ENCODE measurements at regions of chr3 and their contacts with region 1.

Region 1: DNA sequence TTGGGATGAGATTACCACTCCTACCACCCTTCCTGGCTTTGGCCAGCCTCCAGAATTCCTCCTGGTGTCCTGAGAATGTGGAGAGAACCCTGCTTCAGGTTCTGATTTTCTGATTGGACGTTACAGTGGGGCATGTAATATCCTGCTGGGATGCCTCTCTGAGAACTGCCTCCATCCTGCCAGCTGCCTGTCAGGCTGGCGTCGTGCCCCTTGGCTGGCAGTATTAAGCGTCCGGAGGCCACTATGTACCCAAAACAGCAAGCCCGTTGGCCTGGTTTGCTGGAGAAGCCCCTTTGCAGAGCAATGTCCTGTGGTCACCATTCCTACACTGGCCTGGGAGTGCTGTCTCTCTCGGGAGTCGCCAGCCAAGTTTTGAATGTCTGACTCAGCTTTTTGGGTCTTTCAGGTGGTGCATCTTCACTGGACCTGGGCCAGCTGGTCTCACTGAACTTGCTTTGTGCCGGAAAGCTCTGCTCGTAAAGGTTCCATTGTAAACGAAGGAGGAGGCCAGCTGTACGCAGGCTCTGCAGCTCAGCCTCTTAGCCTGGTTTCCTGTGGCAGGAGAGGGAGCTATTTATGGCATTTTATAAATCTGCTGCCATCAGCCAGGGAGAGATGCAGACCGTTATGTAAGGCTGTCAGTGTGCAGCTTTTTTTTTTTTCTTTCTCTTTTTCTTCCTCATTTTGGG is 19.1 kb upstream of the TRAK1 start:
- DNase-seq: peak; percentile 75
- ATAC-seq: peak; percentile 88
- H3K4me3 ChIP-seq: no peak overlapping the region
- H3K27ac ChIP-seq: peak overlapping the region; percentile 22
- H3K4me1 ChIP-seq: peaks cover 19% of the 10 kb centered on the region
- H3K27me3 ChIP-seq: no peaks in the 10 kb centered on the region
- CTCF ChIP-seq: no peak
- POLR2A ChIP-seq: no peak
- RAD21 ChIP-seq: no peak

Region 2: GRCh38 chr3:41961750-41962679 is 110.0 kb before region 1 on chr3 and contains the start of gene ULK4:
- CTCF ChIA-PET with region 1: interaction called, 3 read pairs
- POLR2A ChIA-PET with region 1: no interaction called
- dilution Hi-C with region 1: no loop called
- in situ Hi-C with region 1: no loop called
- intact Hi-C with region 1: loop called (anchors 5 kb)
- DNase-seq: peak; percentile 100
- ATAC-seq: peak; percentile 94
- H3K4me3 ChIP-seq: peak within 1 kb of the TSS; percentile 52
- H3K27ac ChIP-seq: peak within 1 kb of the TSS; percentile 25
- H3K4me1 ChIP-seq: peaks cover 3% of the 10 kb centered on the region; the same call in 1 of the 2 replicates
- H3K27me3 ChIP-seq: no peaks in the 10 kb centered on the region
- CTCF ChIP-seq: no peak
- POLR2A ChIP-seq: peak; percentile 74; the same call in 1 of the 2 replicates
- RAD21 ChIP-seq: no peak
- total RNA-seq, gene ULK4: 5.0 and 10.3 TPM in 2 replicates

Region 3: GRCh38 chr3:42755681-42756578 is 683.9 kb after region 1 on chr3:
- CTCF ChIA-PET with region 1: no interaction called
- POLR2A ChIA-PET with region 1: no interaction called
- dilution Hi-C with region 1: no loop called
- in situ Hi-C with region 1: no loop called
- intact Hi-C with region 1: no loop called
- DNase-seq: peak; percentile 35
- ATAC-seq: peak; percentile 93
- H3K4me3 ChIP-seq: no peak overlapping the region
- H3K27ac ChIP-seq: no peak overlapping the region
- H3K4me1 ChIP-seq: no peaks in the 10 kb centered on the region
- H3K27me3 ChIP-seq: peaks cover 9% of the 10 kb centered on the region
- CTCF ChIP-seq: peak; percentile 48
- POLR2A ChIP-seq: no peak
- RAD21 ChIP-seq: peak; percentile 45

Measured in IMR-90 (cell line).